ENCODE measurements at regions of chr6 and their contacts with region 1.

Region 1: GRCh38 chr6:20291764-20292580 is 79.7 kb upstream of the MBOAT1 start:
- DNase-seq: peak; percentile 60
- H3K4me3 Mint-ChIP-seq: no peak overlapping the region
- H3K27ac Mint-ChIP-seq: no peak overlapping the region
- H3K4me1 Mint-ChIP-seq: peaks cover 41% of the 10 kb centered on the region
- H3K27me3 Mint-ChIP-seq: peaks cover 3% of the 10 kb centered on the region

Region 2: GRCh38 chr6:20092071-20092566 is 199.9 kb before region 1 on chr6:
- intact Hi-C with region 1: loop called (anchors 1 kb)
- DNase-seq: no peak
- H3K4me3 Mint-ChIP-seq: no peak overlapping the region
- H3K27ac Mint-ChIP-seq: no peak overlapping the region
- H3K4me1 Mint-ChIP-seq: no peaks in the 10 kb centered on the region
- H3K27me3 Mint-ChIP-seq: no peaks in the 10 kb centered on the region

Region 3: DNA sequence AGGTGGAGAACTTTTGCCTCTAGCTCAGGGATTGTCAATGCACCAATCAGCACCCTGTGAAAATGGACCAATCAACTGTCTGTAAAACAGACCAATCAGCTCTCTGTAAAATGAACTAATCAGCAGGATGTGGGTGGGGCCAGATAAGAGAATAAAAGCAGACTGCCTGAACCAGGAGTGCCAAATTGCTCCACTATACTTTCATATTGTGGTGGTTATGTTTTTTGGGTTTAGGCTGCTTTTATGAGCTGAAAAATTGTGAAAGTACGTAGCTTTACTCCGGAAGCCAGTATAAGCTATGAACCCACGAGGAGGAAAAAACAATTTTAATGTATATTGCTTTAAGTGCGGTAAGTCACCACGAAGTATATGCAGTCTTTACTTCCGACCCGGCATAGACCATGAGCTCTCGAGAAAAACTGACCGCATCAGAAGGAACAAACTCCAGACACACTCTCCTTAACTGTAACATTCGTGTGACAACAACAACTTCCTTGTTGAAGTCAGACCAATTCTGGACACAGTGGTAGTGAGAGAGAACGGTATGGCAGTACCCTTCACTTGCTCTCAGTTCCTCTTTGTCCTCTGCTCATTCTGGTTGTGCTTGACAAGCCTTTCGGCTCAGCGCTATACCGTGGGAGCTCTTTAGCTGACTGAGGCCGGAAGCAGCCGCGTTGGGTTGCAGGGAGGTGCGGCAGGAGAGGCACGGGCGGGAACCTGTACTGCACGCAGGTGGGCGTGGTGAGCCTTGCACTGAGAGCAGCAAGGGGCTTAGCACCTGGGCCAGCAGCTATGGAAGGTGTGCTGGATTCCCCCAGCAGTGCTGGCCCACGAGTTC is 27.8 kb after region 1 on chr6:
- intact Hi-C with region 1: loop called (anchors 2 kb)
- DNase-seq: peak; percentile 66
- H3K4me3 Mint-ChIP-seq: peak overlapping the region; percentile 83
- H3K27ac Mint-ChIP-seq: peak overlapping the region; percentile 97
- H3K4me1 Mint-ChIP-seq: peaks cover 17% of the 10 kb centered on the region
- H3K27me3 Mint-ChIP-seq: no peaks in the 10 kb centered on the region

Region 4: GRCh38 chr6:20534295-20535262 is 242.6 kb after region 1 on chr6 and contains the start of gene CDKAL1:
- intact Hi-C with region 1: loop called (anchors 1 kb)
- DNase-seq: peak; percentile 91
- H3K4me3 Mint-ChIP-seq: peak within 1 kb of the TSS; percentile 98
- H3K27ac Mint-ChIP-seq: peak within 1 kb of the TSS; percentile 97
- H3K4me1 Mint-ChIP-seq: peaks cover 54% of the 10 kb centered on the region
- H3K27me3 Mint-ChIP-seq: peaks cover 3% of the 10 kb centered on the region
- total RNA-seq, gene CDKAL1: 32.2 and 32.6 TPM in 2 replicates

Region 5: GRCh38 chr6:20708367-20709124 is 416.6 kb after region 1 on chr6:
- intact Hi-C with region 1: no loop called
- DNase-seq: no peak
- H3K4me3 Mint-ChIP-seq: no peak overlapping the region
- H3K27ac Mint-ChIP-seq: peak overlapping the region; percentile 75
- H3K4me1 Mint-ChIP-seq: peaks cover 43% of the 10 kb centered on the region
- H3K27me3 Mint-ChIP-seq: no peaks in the 10 kb centered on the region